Mammary epithelial cell (primary cell): ENCODE measurements at regions of chr1 and their contacts with region 1.

Region 1: GRCh38 chr1:235670157-235670776 is 20.7 kb upstream of the GNG4 start:
- DNase-seq: no peak
- H3K4me3 ChIP-seq: no peak overlapping the region
- H3K27ac ChIP-seq: no peak overlapping the region
- H3K4me1 ChIP-seq: no peaks in the 10 kb centered on the region
- H3K27me3 ChIP-seq: no peaks in the 10 kb centered on the region
- CTCF ChIP-seq: no peak

Region 2: DNA sequence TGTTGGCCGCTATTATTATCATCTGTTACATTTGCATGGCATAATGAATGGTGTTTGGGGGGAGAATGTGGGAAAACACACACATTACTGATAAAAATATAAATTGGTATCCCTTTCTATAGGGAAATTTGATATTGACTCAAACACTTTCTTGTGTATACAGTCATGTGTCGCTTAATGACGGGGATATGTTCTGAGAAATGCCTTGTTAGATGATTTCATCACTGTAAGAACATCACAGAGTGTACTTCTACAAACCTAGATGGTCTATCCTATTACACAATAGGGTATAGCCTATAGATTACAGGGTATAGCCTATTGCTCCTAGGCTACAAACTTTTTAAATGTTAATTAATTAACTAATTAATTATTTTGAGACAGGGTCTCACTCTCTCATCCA is 98.8 kb before region 1 on chr1:
- CTCF ChIA-PET with region 1: no interaction called
- dilution Hi-C with region 1: no loop called
- in situ Hi-C with region 1: no loop called
- intact Hi-C with region 1: no loop called
- DNase-seq: no peak
- H3K4me3 ChIP-seq: no peak overlapping the region
- H3K27ac ChIP-seq: no peak overlapping the region
- H3K4me1 ChIP-seq: no peaks in the 10 kb centered on the region
- H3K27me3 ChIP-seq: no peaks in the 10 kb centered on the region
- CTCF ChIP-seq: no peak

Region 3: DNA sequence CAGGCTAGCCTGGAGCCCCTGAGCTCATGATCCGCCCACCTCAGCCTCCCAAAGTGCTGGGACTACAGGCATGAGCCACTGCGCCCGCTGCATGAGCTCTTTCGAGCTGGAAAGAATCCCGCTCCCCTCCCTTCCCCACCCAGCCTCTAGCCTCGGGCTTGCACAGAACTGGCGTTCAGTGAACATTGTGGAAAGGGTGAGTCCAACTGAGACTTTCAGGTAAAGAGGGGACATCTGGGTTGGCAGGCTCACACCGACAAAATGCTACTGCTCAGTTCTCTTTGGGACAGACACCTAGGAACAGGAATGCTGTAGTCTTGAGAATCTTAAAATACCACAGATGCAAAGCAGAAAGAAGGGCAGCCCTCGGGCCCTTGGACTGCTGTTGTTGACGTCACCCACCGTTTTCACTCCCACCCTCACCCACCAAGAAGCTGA is 10.9 kb before region 1 on chr1:
- CTCF ChIA-PET with region 1: interaction called, 14 read pairs
- dilution Hi-C with region 1: no loop called
- in situ Hi-C with region 1: no loop called
- intact Hi-C with region 1: no loop called
- DNase-seq: no peak
- H3K4me3 ChIP-seq: no peak overlapping the region
- H3K27ac ChIP-seq: no peak overlapping the region
- H3K4me1 ChIP-seq: no peaks in the 10 kb centered on the region
- H3K27me3 ChIP-seq: no peaks in the 10 kb centered on the region
- CTCF ChIP-seq: no peak

Region 4: DNA sequence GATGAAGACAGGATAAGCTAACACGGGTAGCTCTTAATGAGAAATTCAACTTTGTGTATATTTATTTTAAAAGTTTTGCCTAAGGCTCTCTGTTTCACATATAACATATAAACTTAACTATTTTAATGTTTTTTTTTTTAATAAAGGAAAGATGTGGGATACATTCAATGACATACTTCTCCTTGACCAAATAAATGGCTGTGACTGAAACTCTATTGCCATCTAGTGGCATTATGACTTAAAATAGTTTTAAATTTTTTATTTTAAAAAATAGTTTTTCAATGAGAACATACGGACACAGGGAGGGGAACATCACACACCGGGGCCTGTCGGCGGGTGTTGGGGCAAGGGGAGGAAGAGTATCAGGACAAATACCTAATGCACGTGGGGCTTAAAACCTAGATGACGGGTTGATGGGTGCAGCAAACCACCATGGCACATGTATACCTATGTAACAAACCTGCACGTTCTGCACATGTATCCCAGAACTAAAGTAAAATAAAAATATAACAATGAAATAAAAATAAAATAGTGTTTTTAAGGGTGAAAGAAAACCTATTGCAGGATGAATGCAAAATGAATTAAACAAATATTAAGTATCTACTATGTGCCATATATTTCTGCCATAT is 113.0 kb after region 1 on chr1:
- CTCF ChIA-PET with region 1: no interaction called
- dilution Hi-C with region 1: no loop called
- in situ Hi-C with region 1: no loop called
- intact Hi-C with region 1: loop called (anchors 5 kb)
- DNase-seq: peak; percentile 21
- H3K4me3 ChIP-seq: no peak overlapping the region
- H3K27ac ChIP-seq: no peak overlapping the region
- H3K4me1 ChIP-seq: peaks cover 4% of the 10 kb centered on the region
- H3K27me3 ChIP-seq: no peaks in the 10 kb centered on the region
- CTCF ChIP-seq: peak; percentile 21 to 42

Region 5: DNA sequence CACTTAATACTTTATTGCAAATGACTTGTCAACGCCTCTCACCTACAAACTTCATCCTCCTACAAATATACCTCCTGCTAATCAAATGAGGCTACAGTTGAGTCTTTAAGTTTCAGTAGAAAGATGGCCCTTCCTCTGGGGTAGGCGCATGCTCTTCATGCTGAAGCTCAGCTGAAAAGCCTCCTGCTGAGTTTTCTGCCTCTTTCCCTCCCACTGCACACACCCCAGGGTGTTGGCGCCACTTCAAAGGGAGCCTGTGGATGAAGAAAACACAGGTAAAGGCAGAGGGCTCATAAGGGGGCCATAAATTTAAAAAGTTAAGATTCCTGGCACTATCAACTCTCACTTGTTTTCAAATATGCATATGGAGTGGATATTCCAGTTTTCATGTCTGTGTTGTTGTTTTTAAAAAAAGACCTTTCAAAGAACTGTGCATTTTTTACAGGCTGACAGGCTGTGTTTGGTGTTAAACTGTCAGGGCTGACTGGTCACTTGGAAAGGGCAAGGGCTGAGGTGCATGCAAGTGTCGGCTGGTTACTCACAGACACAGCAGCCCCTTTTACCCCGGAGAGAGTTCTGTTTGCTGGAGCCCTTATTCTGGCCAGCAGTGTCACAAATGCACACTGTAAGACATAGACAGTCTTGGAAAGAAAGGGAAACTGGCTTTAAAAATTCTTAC is 810.6 kb after region 1 on chr1:
- CTCF ChIA-PET with region 1: no interaction called
- dilution Hi-C with region 1: no loop called
- in situ Hi-C with region 1: no loop called
- intact Hi-C with region 1: no loop called
- DNase-seq: no peak
- H3K4me3 ChIP-seq: no peak overlapping the region
- H3K27ac ChIP-seq: no peak overlapping the region
- H3K4me1 ChIP-seq: no peaks in the 10 kb centered on the region
- H3K27me3 ChIP-seq: no peaks in the 10 kb centered on the region
- CTCF ChIP-seq: no peak